A673 (cell line): ENCODE measurements at regions of chr9 and their contacts with region 1.

Region 1: DNA sequence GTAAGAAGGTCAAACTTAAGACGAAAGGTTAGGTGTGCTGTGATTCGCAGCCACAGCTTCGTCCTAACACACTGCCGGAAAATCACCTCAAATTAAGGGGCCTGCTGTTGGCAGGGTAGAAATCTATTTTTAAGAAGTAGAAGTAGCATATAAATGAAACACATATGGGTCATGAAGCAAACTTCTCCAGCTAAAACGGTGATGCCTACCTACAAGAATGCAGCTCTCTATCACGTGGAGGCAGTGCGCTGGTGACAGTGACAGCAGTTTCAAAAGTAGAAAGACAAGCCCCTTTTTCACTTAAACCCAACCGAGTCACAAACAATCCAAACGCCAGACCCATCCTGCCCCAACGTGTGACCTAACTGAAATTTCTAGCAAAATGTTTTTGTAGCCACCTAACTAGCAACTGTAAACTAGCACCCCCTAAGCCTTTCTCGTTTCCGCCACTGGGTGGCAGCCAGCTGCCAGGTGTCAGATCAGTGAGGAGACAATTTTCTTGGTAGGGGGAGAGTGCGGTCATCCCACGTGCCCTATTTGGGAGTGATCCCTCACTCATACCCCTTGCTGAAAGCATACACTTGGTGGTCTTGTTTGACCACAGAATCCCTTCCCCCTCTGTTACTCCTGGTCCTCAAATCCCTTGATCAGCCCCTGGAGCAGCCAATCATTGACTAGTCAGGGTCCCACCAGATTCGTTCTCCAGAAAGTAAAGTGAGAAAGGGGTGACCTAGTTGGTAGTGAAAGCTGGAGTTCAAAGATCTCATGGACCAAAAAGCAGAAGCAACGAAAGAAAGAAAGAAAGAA is 71.8 kb upstream of the MAMDC2 start:
- DNase-seq: peak; percentile 60
- H3K4me3 ChIP-seq: no peak overlapping the region
- H3K27ac ChIP-seq: no peak overlapping the region
- H3K4me1 ChIP-seq: no peaks in the 10 kb centered on the region
- H3K27me3 ChIP-seq: no peaks in the 10 kb centered on the region
- CTCF ChIP-seq: peak; percentile 85

Region 2: DNA sequence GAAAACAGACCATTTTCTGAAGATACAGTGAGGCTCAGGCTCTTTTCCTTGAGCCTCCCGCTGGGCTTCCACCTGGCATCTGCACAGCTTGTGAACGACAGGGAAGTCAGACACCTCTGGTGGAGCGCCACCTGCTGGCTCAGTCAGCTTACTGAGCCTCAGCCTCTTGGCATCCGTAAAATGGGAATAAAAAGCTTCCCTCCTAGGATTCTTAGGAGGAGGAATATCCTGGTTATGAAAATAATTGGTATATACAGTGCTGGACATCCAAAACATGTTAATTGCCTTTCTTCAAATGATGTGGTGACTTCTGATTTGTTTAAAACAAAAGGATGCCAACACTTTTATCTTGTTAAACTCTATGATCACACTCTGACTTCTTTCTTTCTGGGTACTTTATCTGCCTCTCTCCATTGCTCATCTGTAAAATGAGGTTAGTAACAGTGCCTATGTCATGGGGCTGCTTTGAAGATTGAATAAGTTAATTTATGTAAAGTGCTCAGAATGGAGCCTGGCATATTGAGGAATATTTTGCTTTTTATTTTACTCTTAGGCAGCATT is 139.3 kb after region 1 on chr9:
- CTCF ChIA-PET with region 1: interaction called, 16 read pairs
- POLR2A ChIA-PET with region 1: no interaction called
- intact Hi-C with region 1: loop called (anchors 1 kb)
- DNase-seq: peak; percentile 58
- H3K4me3 ChIP-seq: no peak overlapping the region
- H3K27ac ChIP-seq: no peak overlapping the region
- H3K4me1 ChIP-seq: no peaks in the 10 kb centered on the region
- H3K27me3 ChIP-seq: peaks cover 7% of the 10 kb centered on the region
- CTCF ChIP-seq: peak; percentile 94